ENCODE measurements at regions of chr9 and their contacts with region 1.

Region 1: DNA sequence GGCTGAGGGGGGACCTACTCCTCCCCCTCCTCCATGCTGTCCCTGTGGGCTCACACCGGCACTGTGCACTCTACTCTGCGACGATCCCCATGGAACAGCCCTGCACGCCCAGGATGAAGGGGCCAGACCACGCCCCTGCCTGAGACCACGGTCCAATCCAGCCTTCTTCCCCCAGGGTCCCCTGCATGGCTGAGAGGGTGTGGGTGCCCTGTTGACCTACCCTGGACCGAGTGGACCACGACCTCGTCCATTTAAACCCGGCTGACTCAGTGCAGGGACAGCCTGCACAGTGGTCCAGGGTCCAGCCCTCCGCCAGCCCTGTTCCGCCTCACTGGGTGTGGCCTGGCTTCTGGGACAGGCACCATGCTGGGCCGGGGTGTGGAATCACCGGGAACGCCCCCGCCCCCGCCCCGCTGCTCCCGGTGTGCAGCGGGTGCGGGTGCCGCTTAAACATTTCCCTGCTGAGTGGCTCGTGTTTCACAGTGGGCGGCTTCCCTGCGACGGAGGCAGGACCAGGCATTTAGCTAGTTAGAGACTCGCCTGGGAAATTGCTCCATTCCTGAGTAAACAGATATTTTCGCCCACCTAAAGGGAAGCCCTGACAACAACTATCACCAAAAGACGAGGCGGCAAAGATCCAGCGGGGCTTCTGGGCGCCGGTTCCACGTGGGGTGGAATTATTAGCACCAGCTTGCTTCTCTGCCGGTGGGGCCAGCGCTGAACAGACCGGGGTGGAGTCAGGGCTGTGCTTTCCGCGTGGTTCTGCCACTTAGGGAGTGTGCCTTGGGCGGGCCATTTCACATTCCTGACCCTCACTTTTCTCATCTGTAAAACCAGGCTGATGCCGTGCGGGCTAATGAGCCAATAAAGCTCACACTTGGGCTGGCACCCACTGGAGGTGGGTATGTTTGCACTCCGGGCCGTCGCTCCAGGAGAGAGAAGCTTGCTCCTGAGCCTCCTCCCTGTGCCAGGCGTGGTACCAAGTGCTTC is 22.6 kb downstream of the DBH start:
- DNase-seq: peak; percentile 88

Region 2: GRCh38 chr9:133635533-133636461 is 22.9 kb before region 1 on chr9 and contains the start of gene DBH:
- intact Hi-C with region 1: loop called in 1 of 2 experiments (anchors 1 kb)
- DNase-seq: no peak
- total RNA-seq, gene DBH: not detected

Measured in posterior vena cava (tissue), 2 donors.